K562 (cell line): ENCODE measurements at regions of chr7 and their contacts with region 1.

Region 1: GRCh38 chr7:130069978-130070860 is at the start of gene KLHDC10:
- DNase-seq: peak; percentile 99 to 100 (median 100)
- ATAC-seq: peak; percentile 94
- H3K4me3 ChIP-seq: peak within 1 kb of the TSS; percentile 60
- H3K27ac ChIP-seq: peak within 1 kb of the TSS; percentile 78
- H3K4me1 ChIP-seq: peaks cover 11 to 20% of the 10 kb centered on the region in 2 experiments
- H3K27me3 ChIP-seq: no peaks in the 10 kb centered on the region
- CTCF ChIP-seq: 0 out of 6 replicates have a peak, but pooled peaks of 1 of the 3 experiments have one; percentile 1
- EP300 ChIP-seq: peak; percentile 65
- POLR2A ChIP-seq: peak; percentile 91
- RAD21 ChIP-seq: 0 out of 4 replicates have a peak, but pooled peaks of 1 of the 2 experiments have one; percentile 17
- polyA plus RNA-seq, gene KLHDC10: 9.8 to 11.3 TPM

Region 2: GRCh38 chr7:130205084-130205947 is 135.1 kb after region 1 on chr7 and contains the start of gene TMEM209:
- CTCF ChIA-PET with region 1: no interaction called
- POLR2A ChIA-PET with region 1: interaction called, 7 read pairs
- in situ Hi-C with region 1: no loop called
- intact Hi-C with region 1: loop called (anchors 2 kb)
- DNase-seq: peak; percentile 99 to 100 (median 100)
- ATAC-seq: peak; percentile 85
- H3K4me3 ChIP-seq: peak within 1 kb of the TSS; percentile 60
- H3K27ac ChIP-seq: peak within 1 kb of the TSS; percentile 95
- H3K4me1 ChIP-seq: peaks cover 24 to 49% of the 10 kb centered on the region in 2 experiments
- H3K27me3 ChIP-seq: no peaks in the 10 kb centered on the region
- CTCF ChIP-seq: peak in 1 of 3 experiments; percentile 53; a peak in 2 of 6 replicates
- EP300 ChIP-seq: peak; percentile 67
- POLR2A ChIP-seq: peak; percentile 99
- RAD21 ChIP-seq: no peak; a peak in 1 of 4 replicates
- polyA plus RNA-seq, gene TMEM209: 74.6 to 82.1 TPM

Region 3: GRCh38 chr7:130305433-130306042 is 235.3 kb after region 1 on chr7:
- CTCF ChIA-PET with region 1: no interaction called
- POLR2A ChIA-PET with region 1: interaction called, 3 read pairs
- in situ Hi-C with region 1: no loop called
- intact Hi-C with region 1: loop called (anchors 5 kb)
- DNase-seq: no peak
- ATAC-seq: no peak
- H3K4me3 ChIP-seq: no peak overlapping the region
- H3K27ac ChIP-seq: no peak overlapping the region
- H3K4me1 ChIP-seq: peaks cover 0 to 2% of the 10 kb centered on the region in 2 experiments; a peak in 1 of 5 replicates
- H3K27me3 ChIP-seq: peaks cover 77 to 79% of the 10 kb centered on the region in 2 experiments
- CTCF ChIP-seq: no peak
- EP300 ChIP-seq: no peak
- POLR2A ChIP-seq: no peak
- RAD21 ChIP-seq: no peak

Region 4: DNA sequence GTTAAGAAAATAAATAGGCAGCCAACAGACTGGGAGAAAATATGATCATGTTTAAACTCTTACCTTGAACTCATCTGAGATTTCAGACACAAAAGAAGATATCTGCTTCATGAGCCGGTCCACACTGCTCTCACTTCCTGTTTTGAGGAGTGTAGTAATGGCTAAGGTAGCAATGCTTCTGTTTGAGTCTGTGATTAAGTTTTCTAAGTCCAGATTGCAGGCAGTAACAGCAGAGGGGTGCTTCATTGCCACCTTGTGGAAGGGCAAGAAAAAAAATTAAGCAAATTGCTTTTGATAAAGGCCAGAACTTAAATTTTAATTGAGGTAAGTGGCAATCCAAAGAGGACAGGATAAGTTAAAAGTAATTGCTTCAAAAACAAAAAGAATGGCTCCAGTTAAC is 490.8 kb after region 1 on chr7:
- CTCF ChIA-PET with region 1: no interaction called
- POLR2A ChIA-PET with region 1: no interaction called
- in situ Hi-C with region 1: no loop called
- intact Hi-C with region 1: loop called (anchors 1 kb)
- DNase-seq: peak in 3 of 4 experiments; percentile 43 to 55 (median 53)
- ATAC-seq: peak; percentile 89
- H3K4me3 ChIP-seq: no peak overlapping the region
- H3K27ac ChIP-seq: no peak overlapping the region
- H3K4me1 ChIP-seq: no peaks in the 10 kb centered on the region
- H3K27me3 ChIP-seq: no peaks in the 10 kb centered on the region
- CTCF ChIP-seq: peak; percentile 46 to 75 (median 53); a peak in 5 of 6 replicates
- EP300 ChIP-seq: no peak
- POLR2A ChIP-seq: no peak
- RAD21 ChIP-seq: peak; percentile 42 to 78; a peak in 3 of 4 replicates

Region 5: GRCh38 chr7:130721486-130722280 is 651.5 kb after region 1 on chr7:
- CTCF ChIA-PET with region 1: interaction called, 25 read pairs
- POLR2A ChIA-PET with region 1: interaction called, 4 read pairs
- in situ Hi-C with region 1: loop called (anchors 10 kb)
- intact Hi-C with region 1: loop called (anchors 1 kb)
- DNase-seq: peak; percentile 44 to 86 (median 70)
- ATAC-seq: peak; percentile 100
- H3K4me3 ChIP-seq: no peak overlapping the region
- H3K27ac ChIP-seq: no peak overlapping the region
- H3K4me1 ChIP-seq: no peaks in the 10 kb centered on the region
- H3K27me3 ChIP-seq: peaks cover 13 to 30% of the 10 kb centered on the region in 2 experiments
- CTCF ChIP-seq: peak; percentile 92 to 97 (median 95)
- EP300 ChIP-seq: 0 out of 2 replicates have a peak, but pooled peaks have one; percentile 35
- POLR2A ChIP-seq: no peak
- RAD21 ChIP-seq: peak; percentile 96 to 98

Region 6: DNA sequence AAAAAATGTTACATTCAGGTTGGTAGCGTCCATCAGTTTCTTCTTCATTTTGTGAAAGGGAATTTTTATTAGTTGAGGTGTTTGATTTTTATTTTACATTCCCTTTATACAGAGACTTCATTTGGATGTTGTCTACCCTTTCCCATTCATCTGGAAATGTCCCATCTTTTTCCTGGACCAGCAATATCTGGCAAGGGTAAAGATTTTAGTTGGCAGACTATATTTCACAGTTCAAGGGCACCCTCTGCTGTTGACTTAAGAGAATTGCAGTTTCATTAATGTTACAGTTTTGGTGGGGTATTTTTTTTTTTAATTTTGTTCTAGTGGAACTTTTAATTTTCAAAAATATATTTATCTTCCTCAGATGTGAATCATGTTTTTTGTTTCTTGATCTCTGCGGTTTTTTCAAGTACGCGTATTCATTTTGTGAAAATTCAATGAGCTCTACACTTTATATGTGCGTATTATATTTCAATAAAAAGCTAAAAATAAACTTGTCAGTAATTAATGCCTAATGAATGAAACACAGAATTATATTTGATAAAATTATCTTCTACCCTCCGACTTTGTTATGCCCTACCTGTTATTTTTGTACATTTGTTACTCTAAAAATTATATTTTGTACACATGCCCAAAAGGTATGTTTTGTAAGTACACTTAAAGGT is 761.7 kb after region 1 on chr7:
- CTCF ChIA-PET with region 1: interaction called, 10 read pairs
- POLR2A ChIA-PET with region 1: no interaction called
- in situ Hi-C with region 1: loop called (anchors 5 kb)
- intact Hi-C with region 1: loop called (anchors 1 kb)
- DNase-seq: peak; percentile 64 to 65 (median 64)
- ATAC-seq: peak; percentile 64
- H3K4me3 ChIP-seq: no peak overlapping the region
- H3K27ac ChIP-seq: no peak overlapping the region
- H3K4me1 ChIP-seq: no peaks in the 10 kb centered on the region
- H3K27me3 ChIP-seq: peaks cover 8 to 18% of the 10 kb centered on the region in 2 experiments; a peak in 4 of 5 replicates
- CTCF ChIP-seq: peak; percentile 71 to 92 (median 79); a peak in 5 of 6 replicates
- EP300 ChIP-seq: no peak
- POLR2A ChIP-seq: no peak
- RAD21 ChIP-seq: peak; percentile 81 to 83